Activated T-helper 2 cell treated with anti-CD3 and anti-CD28 coated beads, Interferon-gamma antibody, Interleukin-2, Interleukin-4, amounts not matched to agents 10 μg/mL and 5 μg/mL and 100 μg/mL, durations not matched to agents 14 hours and 24 hours and 36 hours (primary cell): ENCODE measurements at regions of chr10 and their contacts with region 1.

Region 1: DNA sequence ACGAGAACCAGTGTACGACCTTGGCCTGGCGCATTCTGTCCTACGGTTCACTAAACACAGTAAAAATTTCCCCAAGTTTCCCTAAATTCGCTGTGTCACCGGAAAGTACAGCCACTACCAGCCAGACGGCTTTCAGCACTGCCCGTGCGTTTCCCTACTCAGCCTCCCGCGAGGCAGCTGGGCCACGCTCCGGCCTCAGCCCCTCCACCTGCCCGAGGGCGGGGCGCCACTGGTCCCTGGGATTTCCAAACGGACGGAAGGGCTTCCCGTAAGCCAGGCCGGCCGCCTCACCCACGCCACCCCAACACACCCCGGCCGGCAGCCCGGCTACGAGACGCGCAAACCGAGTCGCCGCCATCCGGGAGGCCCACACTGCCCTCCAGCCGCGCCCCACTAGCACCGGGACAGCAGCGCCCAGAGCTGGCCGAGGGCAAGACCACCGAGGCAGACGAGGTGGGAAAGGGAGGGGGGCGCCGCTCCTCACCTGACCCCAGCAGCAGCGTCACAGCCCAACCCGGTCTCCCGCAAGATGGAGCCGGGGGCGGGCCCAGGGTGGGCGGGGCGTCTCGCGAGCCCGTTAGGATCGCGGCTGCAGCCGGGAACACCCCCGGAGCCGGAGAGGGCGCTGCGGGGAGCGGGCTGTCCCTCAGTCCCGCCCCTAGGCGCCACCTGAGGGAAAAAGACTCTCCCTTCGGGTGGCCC is at the start of gene ANXA7:
- DNase-seq: peak; percentile 87
- H3K4me3 Mint-ChIP-seq: peak within 1 kb of the TSS; percentile 98
- H3K27ac Mint-ChIP-seq: peak within 1 kb of the TSS; percentile 94
- H3K4me1 Mint-ChIP-seq: peaks cover 43% of the 10 kb centered on the region
- H3K27me3 Mint-ChIP-seq: no peaks in the 10 kb centered on the region
- total RNA-seq, gene ANXA7: 173 and 174 TPM in 2 replicates

Region 2: GRCh38 chr10:73252445-73253224 is 161.0 kb before region 1 on chr10 and contains the start of gene MRPS16:
- intact Hi-C with region 1: loop called (anchors 2 kb)
- DNase-seq: peak; percentile 92
- H3K4me3 Mint-ChIP-seq: peak within 1 kb of the TSS; percentile 98
- H3K27ac Mint-ChIP-seq: peak within 1 kb of the TSS; percentile 91
- H3K4me1 Mint-ChIP-seq: peaks cover 29% of the 10 kb centered on the region
- H3K27me3 Mint-ChIP-seq: no peaks in the 10 kb centered on the region
- total RNA-seq, gene MRPS16: 145 and 152 TPM in 2 replicates

Region 3: DNA sequence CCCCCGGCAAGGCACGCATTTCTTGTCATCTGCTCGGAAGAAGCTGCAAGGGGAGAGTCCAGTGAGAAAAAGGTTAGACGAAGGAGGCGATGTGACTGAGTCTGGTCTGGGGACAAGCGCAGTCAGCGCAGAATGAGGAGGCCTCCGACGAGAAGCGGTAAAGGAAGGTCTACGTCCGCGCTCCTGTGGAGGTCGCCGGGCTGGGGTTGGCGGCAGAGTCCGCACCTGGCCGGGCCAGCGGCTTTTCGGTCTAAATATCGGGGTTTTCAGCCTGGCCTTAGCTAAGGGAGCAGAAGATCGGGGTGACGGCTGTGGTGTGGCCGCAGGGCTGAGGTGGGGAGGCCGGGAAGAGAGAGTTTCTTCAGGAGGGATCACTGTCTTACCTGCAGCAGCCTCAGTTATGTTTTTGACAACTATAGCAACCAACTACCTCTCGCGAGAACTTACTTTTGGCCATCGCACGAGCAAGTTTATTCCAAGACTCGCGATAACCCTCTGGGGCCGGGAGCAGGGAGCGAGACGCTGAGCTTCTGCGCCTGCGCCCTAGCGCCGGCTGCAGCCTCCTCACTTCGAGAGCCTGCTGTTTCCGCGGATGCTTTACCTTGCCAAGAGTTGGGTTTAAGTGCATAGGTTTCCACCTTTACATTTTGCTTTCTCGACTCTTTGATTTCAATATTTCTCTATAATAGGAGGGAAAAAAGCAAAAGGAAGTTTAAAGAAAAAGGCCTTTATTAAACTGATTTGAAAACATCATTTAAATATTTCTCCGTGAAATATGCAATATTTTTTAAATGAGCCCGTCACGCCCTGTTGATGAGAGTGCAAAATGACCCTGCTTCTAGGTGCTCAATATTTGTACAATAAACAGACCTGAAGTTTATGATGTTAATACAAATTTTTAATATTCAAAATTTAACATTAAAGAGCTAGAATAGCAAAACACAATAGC is 55.1 kb before region 1 on chr10 and contains the start of gene CFAP70:
- intact Hi-C with region 1: loop called (anchors 2 kb)
- DNase-seq: peak; percentile 90
- H3K4me3 Mint-ChIP-seq: peak within 1 kb of the TSS; percentile 89
- H3K27ac Mint-ChIP-seq: peak within 1 kb of the TSS; percentile 77
- H3K4me1 Mint-ChIP-seq: peaks cover 13% of the 10 kb centered on the region
- H3K27me3 Mint-ChIP-seq: peaks cover 8% of the 10 kb centered on the region
- total RNA-seq, gene CFAP70: 0.41 and 0.43 TPM in 2 replicates

Region 4: GRCh38 chr10:73480158-73480557 is 66.5 kb after region 1 on chr10:
- intact Hi-C with region 1: loop called (anchors 2 kb)
- DNase-seq: no peak
- H3K4me3 Mint-ChIP-seq: peak overlapping the region; percentile 39
- H3K27ac Mint-ChIP-seq: peak overlapping the region; percentile 53
- H3K4me1 Mint-ChIP-seq: peaks cover 32% of the 10 kb centered on the region
- H3K27me3 Mint-ChIP-seq: no peaks in the 10 kb centered on the region

Region 5: GRCh38 chr10:73625884-73626752 is 212.4 kb after region 1 on chr10:
- intact Hi-C with region 1: loop called (anchors 5 kb)
- DNase-seq: peak; percentile 91
- H3K4me3 Mint-ChIP-seq: peak overlapping the region; percentile 96
- H3K27ac Mint-ChIP-seq: peak overlapping the region; percentile 96
- H3K4me1 Mint-ChIP-seq: peaks cover 11% of the 10 kb centered on the region
- H3K27me3 Mint-ChIP-seq: no peaks in the 10 kb centered on the region